Caco-2 (cell line): ENCODE measurements at regions of chr10 and their contacts with region 1.

Region 1: DNA sequence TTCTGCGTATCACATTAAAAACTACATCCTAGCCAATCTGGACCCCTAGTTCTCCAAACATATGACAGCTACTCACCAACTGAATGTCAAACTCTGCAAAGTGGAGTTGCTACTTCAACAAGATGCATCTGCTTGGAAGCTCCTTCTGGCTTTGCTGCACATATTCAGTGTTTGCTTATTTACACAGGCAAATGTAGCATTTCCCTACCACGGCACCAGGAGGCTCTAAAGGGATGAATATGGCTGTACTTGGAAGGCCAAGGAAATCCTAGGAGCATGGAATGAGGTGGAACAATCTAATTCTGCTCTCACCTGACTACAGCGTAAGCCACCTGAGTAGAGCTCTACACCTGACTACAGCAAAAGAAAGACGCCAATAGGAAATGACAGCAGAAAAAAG is 39.7 kb downstream of the MTPAP start:
- DNase-seq: no peak
- H3K4me3 ChIP-seq: no peak overlapping the region
- H3K4me3 Mint-ChIP-seq: no peak overlapping the region
- H3K27ac Mint-ChIP-seq: no peak overlapping the region
- H3K4me1 ChIP-seq: no peaks in the 10 kb centered on the region
- H3K4me1 Mint-ChIP-seq: no peaks in the 10 kb centered on the region
- H3K27me3 ChIP-seq: no peaks in the 10 kb centered on the region
- H3K27me3 Mint-ChIP-seq: no peaks in the 10 kb centered on the region
- CTCF ChIP-seq: no peak

Region 2: GRCh38 chr10:30111340-30112022 is 197.9 kb before region 1 on chr10:
- CTCF ChIA-PET with region 1: no interaction called
- POLR2A ChIA-PET with region 1: no interaction called
- intact Hi-C with region 1: no loop called
- DNase-seq: no peak
- H3K4me3 ChIP-seq: no peak overlapping the region
- H3K4me3 Mint-ChIP-seq: no peak overlapping the region
- H3K27ac Mint-ChIP-seq: no peak overlapping the region
- H3K4me1 ChIP-seq: no peaks in the 10 kb centered on the region; the same call in 1 of the 2 replicates
- H3K4me1 Mint-ChIP-seq: peaks cover 14% of the 10 kb centered on the region
- H3K27me3 ChIP-seq: no peaks in the 10 kb centered on the region
- H3K27me3 Mint-ChIP-seq: no peaks in the 10 kb centered on the region
- CTCF ChIP-seq: no peak

Region 3: GRCh38 chr10:30247704-30248103 is 61.7 kb before region 1 on chr10:
- CTCF ChIA-PET with region 1: no interaction called
- POLR2A ChIA-PET with region 1: no interaction called
- intact Hi-C with region 1: loop called (anchors 2 kb)
- DNase-seq: no peak
- H3K4me3 ChIP-seq: no peak overlapping the region
- H3K4me3 Mint-ChIP-seq: no peak overlapping the region
- H3K27ac Mint-ChIP-seq: no peak overlapping the region
- H3K4me1 ChIP-seq: no peaks in the 10 kb centered on the region
- H3K4me1 Mint-ChIP-seq: no peaks in the 10 kb centered on the region
- H3K27me3 ChIP-seq: no peaks in the 10 kb centered on the region
- H3K27me3 Mint-ChIP-seq: no peaks in the 10 kb centered on the region
- CTCF ChIP-seq: no peak